AG04450 (cell line): ENCODE measurements at regions of chr11 and their contacts with region 1.

Region 1: GRCh38 chr11:134261626-134262488 is 8.5 kb downstream of the ACAD8 start:
- DNase-seq: no peak
- H3K4me3 ChIP-seq: no peak overlapping the region
- H3K27ac ChIP-seq: no peak overlapping the region
- H3K27me3 ChIP-seq: no peaks in the 10 kb centered on the region
- CTCF ChIP-seq: peak; percentile 60

Region 2: DNA sequence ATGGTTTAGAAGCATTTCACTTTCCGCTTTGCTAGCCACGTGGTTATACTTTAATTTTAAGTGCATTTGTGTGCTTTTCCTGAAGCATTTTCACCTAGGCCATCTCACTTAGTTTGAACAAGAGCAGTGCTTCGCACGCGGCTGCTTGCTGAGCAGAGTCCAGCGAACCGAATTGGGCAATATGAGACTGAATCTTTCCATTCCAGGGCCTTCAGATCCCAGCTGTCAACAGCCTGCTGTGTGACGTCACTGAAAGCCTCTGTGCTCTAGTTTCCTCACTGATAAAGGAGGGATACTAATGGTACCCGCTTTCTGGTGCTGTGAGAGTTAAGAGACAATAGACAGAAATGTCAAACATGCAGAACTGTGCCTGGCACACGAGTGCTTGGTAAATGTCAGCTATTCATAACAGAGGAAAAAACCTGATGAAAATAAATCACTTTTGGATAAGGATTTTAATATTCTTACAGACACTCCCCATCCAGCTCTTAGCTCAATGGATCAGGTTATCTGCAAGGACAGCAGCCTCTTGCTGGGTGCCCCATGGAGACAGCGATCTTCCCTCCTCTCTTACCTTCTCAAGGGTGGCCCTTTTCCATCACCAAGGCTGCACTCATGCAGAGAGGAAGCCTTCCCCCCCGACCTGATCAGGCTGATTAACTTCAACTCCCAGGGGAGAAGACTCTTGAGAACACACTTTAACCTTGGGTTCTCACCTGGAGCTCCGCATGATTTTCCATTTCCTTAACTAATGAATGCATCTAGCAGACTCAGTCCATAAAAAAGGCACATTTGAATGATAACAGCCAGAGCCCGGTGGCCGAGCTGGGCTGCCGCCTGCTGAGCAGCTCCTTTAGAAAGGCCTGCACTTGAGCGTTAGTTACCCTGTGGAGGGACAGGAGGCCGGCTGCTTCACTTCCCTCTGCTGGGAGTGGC is 10.8 kb after region 1 on chr11:
- CTCF ChIA-PET with region 1: interaction called, 14 read pairs
- POLR2A ChIA-PET with region 1: no interaction called
- DNase-seq: peak; percentile 39
- H3K4me3 ChIP-seq: no peak overlapping the region
- H3K27ac ChIP-seq: no peak overlapping the region
- H3K27me3 ChIP-seq: peaks cover 51% of the 10 kb centered on the region
- CTCF ChIP-seq: no peak